CD14-positive monocyte (primary cell): ENCODE measurements at regions of chr18 and their contacts with region 1.

Region 1: DNA sequence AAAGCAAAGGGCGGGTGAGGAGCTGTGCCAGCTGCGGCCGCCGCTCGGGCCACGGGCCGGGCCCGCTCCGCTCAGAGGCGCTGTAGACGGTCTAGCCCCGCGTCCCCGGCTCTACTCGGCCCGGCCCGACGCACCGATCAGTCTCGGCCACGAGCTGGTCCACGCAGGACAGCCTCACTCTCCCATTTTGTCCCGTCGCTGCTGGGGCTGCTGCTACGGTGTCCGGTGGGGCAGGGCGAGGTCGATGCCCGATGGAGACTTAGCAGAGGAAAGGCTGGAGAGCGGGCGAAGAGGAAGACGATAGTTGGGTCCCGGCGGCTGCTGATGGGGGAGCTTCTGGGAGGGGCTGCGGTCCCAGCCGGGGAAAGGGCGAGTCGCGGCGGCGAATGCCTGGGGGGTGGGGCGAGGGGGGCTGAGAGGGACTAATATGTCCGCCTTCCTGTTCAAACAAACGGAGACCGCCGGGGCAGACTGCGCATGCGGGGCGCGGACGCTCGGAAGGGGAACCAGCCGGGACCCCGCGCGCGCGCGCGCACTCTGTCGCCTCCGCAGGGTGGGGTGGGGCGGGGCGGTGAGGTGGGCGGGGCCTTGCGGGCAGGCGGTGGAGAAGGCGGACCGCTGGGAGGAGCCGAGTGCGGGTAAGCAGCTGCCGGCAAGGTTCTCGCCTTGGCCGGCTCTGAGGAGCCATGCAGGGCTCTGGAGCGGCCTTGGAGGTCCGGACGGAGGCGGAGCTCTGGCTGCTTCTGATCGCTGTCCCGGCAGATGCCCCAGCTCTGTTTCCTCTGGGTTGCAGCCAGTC is at the start of gene ROCK1:
- DNase-seq: peak; percentile 91 to 96 (median 94)
- H3K4me3 ChIP-seq: peak within 1 kb of the TSS; percentile 80 to 99 (median 92)
- H3K4me3 Mint-ChIP-seq: peak within 1 kb of the TSS; percentile 95 to 97
- H3K27ac ChIP-seq: peak within 1 kb of the TSS; percentile 93 to 96
- H3K27ac Mint-ChIP-seq: peak within 1 kb of the TSS; percentile 96 to 99 (median 98)
- H3K4me1 ChIP-seq: peaks cover 37 to 52% of the 10 kb centered on the region in 2 donors
- H3K4me1 Mint-ChIP-seq: peaks cover 12% of the 10 kb centered on the region
- H3K27me3 ChIP-seq: no peaks in the 10 kb centered on the region
- H3K27me3 Mint-ChIP-seq: no peaks in the 10 kb centered on the region
- CTCF ChIP-seq: no peak
- polyA plus RNA-seq, gene ROCK1: 10.2 to 35.3 (median 20.3) TPM

Region 2: DNA sequence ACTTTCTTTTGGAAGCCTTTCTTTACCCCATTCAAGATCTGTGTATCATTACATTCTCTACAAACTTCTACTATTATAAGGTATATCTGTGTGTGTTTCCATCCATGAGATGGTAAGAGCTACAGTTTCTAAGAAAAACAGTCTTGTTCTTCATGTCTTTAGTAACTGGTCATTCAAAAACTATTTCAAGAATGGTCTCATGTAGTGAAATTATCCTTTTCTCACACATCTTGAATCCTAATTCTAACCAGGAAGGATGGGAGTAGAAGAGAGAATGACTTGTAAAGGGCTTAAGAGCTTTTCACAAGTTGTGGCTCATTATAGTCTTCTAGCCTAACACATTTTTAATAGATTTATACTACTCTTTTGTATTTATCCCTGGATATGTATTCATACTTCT is 47.2 kb before region 1 on chr18:
- intact Hi-C with region 1: no loop called
- DNase-seq: no peak
- H3K4me3 ChIP-seq: no peak overlapping the region
- H3K4me3 Mint-ChIP-seq: no peak overlapping the region
- H3K27ac ChIP-seq: no peak overlapping the region
- H3K27ac Mint-ChIP-seq: peak overlapping the region in 2 of 7 donors; percentile 2 to 47
- H3K4me1 ChIP-seq: no peaks in the 10 kb centered on the region
- H3K4me1 Mint-ChIP-seq: no peaks in the 10 kb centered on the region
- H3K27me3 ChIP-seq: no peaks in the 10 kb centered on the region
- H3K27me3 Mint-ChIP-seq: no peaks in the 10 kb centered on the region
- CTCF ChIP-seq: no peak

Region 3: GRCh38 chr18:21163647-21164547 is 52.4 kb after region 1 on chr18:
- intact Hi-C with region 1: loop called (anchors 1 to 10 kb)
- DNase-seq: peak; percentile 93 to 98 (median 95)
- H3K4me3 ChIP-seq: peak overlapping the region in 2 of 3 experiments; percentile 25 to 62
- H3K4me3 Mint-ChIP-seq: peak overlapping the region in 1 of 2 donors; percentile 74
- H3K27ac ChIP-seq: peak overlapping the region; percentile 90
- H3K27ac Mint-ChIP-seq: peak overlapping the region; percentile 92 to 98 (median 96)
- H3K4me1 ChIP-seq: peaks cover 34 to 41% of the 10 kb centered on the region in 2 donors
- H3K4me1 Mint-ChIP-seq: peaks cover 30% of the 10 kb centered on the region
- H3K27me3 ChIP-seq: no peaks in the 10 kb centered on the region
- H3K27me3 Mint-ChIP-seq: peaks cover 0 to 2% (median 0%) of the 10 kb centered on the region in 3 donors
- CTCF ChIP-seq: no peak